Activated T-helper 2 cell treated with anti-CD3 and anti-CD28 coated beads, Interferon-gamma antibody, Interleukin-2, Interleukin-4, amounts not matched to agents 10 μg/mL and 5 μg/mL and 100 μg/mL, durations not matched to agents 14 hours and 24 hours and 36 hours (primary cell): ENCODE measurements at regions of chr21 and their contacts with region 1.

Region 1: GRCh38 chr21:44949779-44950198 is 10.0 kb downstream of the SLX9 start:
- DNase-seq: peak; percentile 64
- H3K4me3 Mint-ChIP-seq: no peak overlapping the region
- H3K27ac Mint-ChIP-seq: no peak overlapping the region
- H3K4me1 Mint-ChIP-seq: peaks cover 1% of the 10 kb centered on the region
- H3K27me3 Mint-ChIP-seq: no peaks in the 10 kb centered on the region

Region 2: DNA sequence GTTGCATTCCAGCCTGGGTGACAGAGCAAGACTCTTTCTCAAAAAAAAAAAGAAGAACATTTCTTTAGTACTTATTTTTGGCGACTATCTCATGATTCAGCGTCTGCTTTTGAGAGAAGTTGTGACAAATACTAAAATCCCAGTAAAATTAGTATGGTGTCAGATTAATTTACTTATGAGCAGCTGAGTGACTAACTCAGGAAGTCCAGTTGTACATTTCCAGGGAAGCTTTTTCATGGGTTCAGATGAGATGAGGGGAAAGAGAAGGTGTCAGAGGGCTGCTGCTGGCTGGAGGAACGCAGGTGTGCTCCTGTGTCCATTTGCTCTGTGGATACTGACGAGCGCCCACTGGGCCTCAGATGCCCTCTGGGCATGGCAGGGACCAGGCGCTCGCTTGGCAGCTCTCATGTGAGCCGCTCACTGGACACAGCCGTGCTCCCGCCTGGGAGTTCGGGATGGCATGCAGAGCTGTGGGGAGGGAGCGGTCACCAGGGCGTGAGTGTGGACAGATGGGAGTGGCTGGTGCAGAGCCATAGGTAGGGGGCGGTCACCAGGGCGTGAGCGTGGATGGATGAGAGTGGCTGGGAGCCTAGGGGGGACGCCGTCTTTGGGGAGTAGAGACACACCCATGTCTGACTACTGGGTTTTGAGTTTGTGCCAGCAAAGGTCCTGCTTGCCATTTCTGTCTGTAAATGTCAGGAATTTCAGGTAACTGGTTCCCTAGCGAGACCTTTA is 179.6 kb after region 1 on chr21:
- intact Hi-C with region 1: loop called (anchors 1 kb)
- DNase-seq: no peak
- H3K4me3 Mint-ChIP-seq: no peak overlapping the region
- H3K27ac Mint-ChIP-seq: no peak overlapping the region
- H3K4me1 Mint-ChIP-seq: peaks cover 14% of the 10 kb centered on the region
- H3K27me3 Mint-ChIP-seq: no peaks in the 10 kb centered on the region